ENCODE measurements at regions of chr4 and their contacts with region 1.

Region 1: GRCh38 chr4:107902715-107903114 is 28.6 kb upstream of the CYP2U1 start:
- DNase-seq: no peak
- H3K4me3 ChIP-seq: no peak overlapping the region
- H3K27ac ChIP-seq: no peak overlapping the region
- H3K4me1 ChIP-seq: no peaks in the 10 kb centered on the region
- H3K27me3 ChIP-seq: no peaks in the 10 kb centered on the region
- CTCF ChIP-seq: no peak
- POLR2A ChIP-seq: no peak

Region 2: GRCh38 chr4:107818301-107818910 is 84.3 kb before region 1 on chr4:
- intact Hi-C with region 1: loop called in 1 of 2 experiments (anchors 10 kb)
- DNase-seq: no peak
- H3K4me3 ChIP-seq: no peak overlapping the region
- H3K27ac ChIP-seq: no peak overlapping the region
- H3K4me1 ChIP-seq: no peaks in the 10 kb centered on the region
- H3K27me3 ChIP-seq: no peaks in the 10 kb centered on the region
- CTCF ChIP-seq: no peak
- POLR2A ChIP-seq: no peak

Measured in adrenal gland (tissue), 19 donors.